Activated T-helper 1 cell treated with anti-CD3 and anti-CD28 coated beads, Interleukin-12 subunit alpha, Interleukin-12 subunit beta, Interleukin-2, Interleukin-4 antibody, amounts not matched to agents 30 ng/mL and 10 ng/mL and 1 ng/mL, durations not matched to agents 14 hours and 24 hours and 36 hours (primary cell): ENCODE measurements at regions of chr17 and their contacts with region 1.

Region 1: GRCh38 chr17:44108440-44109324 is 14.8 kb downstream of the HDAC5 start:
- DNase-seq: no peak
- H3K4me3 Mint-ChIP-seq: no peak overlapping the region
- H3K27ac Mint-ChIP-seq: no peak overlapping the region
- H3K4me1 Mint-ChIP-seq: peaks cover 5% of the 10 kb centered on the region
- H3K27me3 Mint-ChIP-seq: peaks cover 3% of the 10 kb centered on the region

Region 2: GRCh38 chr17:44170499-44171201 is 62.0 kb after region 1 on chr17 and contains the start of gene ASB16:
- intact Hi-C with region 1: no loop called
- DNase-seq: no peak
- H3K4me3 Mint-ChIP-seq: no peak within 1 kb of the TSS
- H3K27ac Mint-ChIP-seq: no peak within 1 kb of the TSS
- H3K4me1 Mint-ChIP-seq: peaks cover 10% of the 10 kb centered on the region
- H3K27me3 Mint-ChIP-seq: no peaks in the 10 kb centered on the region
- total RNA-seq, gene ASB16: 0.31 and 0.42 TPM in 2 replicates

Region 3: DNA sequence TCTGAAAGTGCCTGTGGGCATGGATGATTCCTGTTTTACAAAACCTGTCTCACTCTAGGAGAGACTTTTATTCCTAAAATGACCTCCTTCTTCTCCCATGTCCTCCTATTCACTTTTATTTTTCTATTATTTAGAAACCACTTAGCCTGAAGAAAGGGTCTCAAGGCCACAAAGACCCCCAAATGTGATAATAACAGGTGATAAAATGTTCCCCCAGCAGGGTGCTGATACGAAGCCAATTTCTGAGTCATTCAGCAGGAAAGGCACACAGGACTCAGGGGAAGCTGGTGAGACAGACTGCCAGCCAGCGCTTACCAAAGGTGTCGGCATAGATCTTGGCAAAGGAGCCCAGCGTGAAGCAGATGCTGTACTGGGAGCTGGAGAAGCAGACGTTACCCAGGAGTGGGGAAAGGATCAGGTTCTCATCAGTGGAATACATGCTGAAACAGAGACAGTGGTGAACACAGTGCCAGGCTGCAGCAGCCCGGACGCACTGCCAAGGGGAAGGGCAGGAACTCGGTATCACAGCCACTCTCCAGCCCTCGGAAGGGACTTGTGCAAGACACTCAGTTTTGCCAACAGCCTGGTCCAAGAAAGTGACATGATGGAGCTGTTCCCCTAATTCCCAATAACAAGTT is 763.6 kb after region 1 on chr17:
- intact Hi-C with region 1: loop called (anchors 5 kb)
- DNase-seq: no peak
- H3K4me3 Mint-ChIP-seq: no peak overlapping the region
- H3K27ac Mint-ChIP-seq: no peak overlapping the region
- H3K4me1 Mint-ChIP-seq: no peaks in the 10 kb centered on the region
- H3K27me3 Mint-ChIP-seq: no peaks in the 10 kb centered on the region